Left colon (tissue), 2 donors: ENCODE measurements at regions of chr4 and their contacts with region 1.

Region 1: DNA sequence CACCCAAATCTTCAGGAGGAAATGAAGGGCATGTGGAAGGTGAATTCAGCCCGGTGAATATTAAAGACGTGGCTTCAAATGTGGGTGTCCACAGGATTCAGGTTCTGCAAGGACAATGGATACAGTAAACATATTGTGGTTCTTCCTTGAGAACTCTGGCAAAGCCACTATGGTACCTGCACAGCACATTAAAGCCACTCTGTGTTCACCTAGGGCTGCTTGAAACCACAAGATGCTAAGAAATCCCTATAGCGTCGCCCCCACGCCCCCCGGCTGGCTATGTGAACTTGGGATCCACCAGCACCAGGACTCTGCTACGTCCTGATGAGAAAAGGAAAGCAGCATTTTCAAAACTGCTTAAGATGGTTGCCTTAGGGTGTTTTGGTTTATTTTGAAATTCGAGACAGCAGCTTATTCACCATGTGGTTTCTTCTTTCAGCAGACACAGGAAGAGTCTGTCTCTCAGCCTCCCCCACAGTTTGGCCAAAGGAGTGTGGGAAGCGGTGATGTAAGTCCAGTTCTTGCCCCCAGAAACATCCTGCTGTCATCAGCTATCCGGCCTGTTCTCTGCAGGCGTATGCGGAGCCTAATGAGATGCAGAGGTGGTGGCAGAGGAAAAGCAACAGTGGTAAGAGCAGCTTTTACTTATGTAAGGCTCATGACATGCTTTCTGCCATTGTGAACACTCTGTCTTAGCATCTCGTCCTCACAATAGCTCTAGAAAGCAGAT is 111.5 kb downstream of the AFAP1 start:
- DNase-seq: peak; percentile 40 to 59
- ATAC-seq: no peak

Region 2: DNA sequence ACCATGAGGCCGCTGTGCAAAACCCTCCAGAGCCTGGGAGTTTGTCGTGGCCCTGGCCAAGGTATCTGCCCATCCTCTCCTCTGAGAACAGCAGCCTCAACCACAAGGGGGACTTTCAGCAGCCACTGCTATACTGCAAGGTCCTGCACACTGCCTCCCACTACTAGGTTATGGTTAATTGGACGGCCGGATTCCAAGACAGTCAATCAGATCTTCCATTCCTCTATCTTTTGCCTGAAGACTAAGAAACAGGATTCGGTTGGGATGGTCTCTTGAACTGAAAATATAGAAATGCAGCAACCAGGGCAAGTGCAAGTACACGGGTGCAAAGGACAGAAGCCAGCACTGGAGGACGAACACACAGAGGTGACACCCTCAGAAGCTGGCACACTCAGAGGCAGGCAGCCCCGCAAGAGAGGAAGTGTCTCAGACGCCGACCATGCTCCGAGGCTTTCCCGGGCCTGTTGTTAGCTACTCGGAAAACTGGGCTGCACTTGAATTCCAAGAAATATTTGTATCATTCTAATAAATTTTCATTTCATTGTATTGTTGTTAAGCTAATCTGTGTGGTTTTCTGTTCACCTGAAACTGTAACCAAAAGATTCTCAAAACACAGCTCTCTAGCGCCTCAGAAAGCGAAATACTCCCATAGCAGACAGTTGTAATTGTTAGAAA is 48.2 kb after region 1 on chr4:
- intact Hi-C with region 1: loop called in 1 of 2 experiments (anchors 10 kb)
- DNase-seq: no peak
- ATAC-seq: peak; percentile 41